ENCODE measurements at regions of chr16 and their contacts with region 1.

Region 1: GRCh38 chr16:46689365-46690280 is at the start of gene ORC6:
- DNase-seq: peak; percentile 98
- H3K4me3 ChIP-seq: peak within 1 kb of the TSS; percentile 90
- H3K27ac ChIP-seq: peak within 1 kb of the TSS; percentile 79
- H3K4me1 ChIP-seq: peaks cover 34% of the 10 kb centered on the region
- CTCF ChIP-seq: peak; percentile 85
- total RNA-seq, gene ORC6: 60.6 and 67.4 TPM in 2 replicates

Region 2: DNA sequence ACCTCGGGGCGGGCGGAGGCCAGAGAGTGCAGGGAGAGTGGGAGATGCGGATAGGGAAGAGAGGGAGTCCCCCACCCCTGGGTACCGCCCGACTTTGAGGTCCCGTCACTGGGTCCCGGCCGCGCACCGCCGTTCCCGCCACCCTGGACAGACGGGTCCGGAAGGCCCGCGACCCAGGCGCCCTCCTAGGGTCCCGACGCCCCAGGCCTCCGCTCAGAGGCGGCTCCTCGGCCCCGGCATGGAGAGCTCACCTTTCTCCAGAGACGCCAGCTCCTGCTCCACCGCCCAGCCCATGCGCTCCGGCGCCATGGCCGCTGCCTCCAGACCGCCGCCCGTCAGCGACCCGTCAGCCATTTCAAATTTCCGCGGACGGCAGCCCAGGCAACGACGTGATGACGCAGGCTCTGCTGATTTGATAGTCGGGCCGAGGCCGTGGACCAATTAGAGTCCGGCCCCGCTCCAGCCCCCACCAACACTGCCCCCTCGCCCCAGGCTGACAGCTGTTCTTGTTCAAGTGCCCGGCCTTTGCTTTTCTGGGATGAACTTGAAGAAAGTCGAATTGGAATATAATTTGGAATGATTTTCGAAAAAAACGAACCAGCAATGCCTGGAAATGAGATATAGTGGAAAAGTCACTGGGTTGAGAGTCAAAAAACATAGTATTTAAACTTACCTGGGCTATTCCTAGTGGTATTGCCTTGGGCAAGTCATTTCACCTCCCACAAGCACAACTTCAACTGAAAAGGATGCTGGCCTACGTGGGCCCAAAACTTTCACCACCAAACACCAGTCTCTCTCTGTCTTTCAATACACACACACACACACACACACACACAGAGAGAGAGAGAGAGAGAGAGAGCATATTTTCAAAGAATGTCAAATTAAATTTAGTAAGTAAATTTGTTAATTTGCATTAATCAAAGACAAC is 68.4 kb before region 1 on chr16 and contains the start of gene SHCBP1:
- CTCF ChIA-PET with region 1: no interaction called
- POLR2A ChIA-PET with region 1: no interaction called
- intact Hi-C with region 1: loop called (anchors 2 kb)
- DNase-seq: peak; percentile 92
- H3K4me3 ChIP-seq: peak within 1 kb of the TSS; percentile 86
- H3K27ac ChIP-seq: peak within 1 kb of the TSS; percentile 76
- H3K4me1 ChIP-seq: peaks cover 31% of the 10 kb centered on the region
- CTCF ChIP-seq: no peak; the same call in 1 of the 2 replicates
- total RNA-seq, gene SHCBP1: 32.6 and 35.3 TPM in 2 replicates

Region 3: DNA sequence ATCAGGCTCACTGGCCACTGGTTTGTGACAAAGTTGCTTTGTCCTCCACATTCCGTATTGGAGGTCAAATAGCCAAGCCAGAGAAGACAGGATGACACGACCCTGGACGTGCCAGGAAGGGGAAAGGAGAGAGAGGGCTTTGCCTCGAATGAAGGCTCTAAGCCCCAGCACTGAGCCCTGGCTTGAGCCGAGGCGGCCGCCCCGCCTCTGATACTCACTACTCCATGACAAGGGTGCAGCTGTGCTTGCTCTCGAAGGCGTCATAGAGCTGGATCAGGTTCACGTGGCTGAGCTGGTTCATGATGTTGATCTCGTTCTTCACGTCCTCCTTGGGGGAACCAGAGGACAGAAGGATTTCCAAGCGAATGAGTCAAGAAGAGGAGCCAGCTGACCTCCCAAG is 39.2 kb after region 1 on chr16:
- CTCF ChIA-PET with region 1: no interaction called
- POLR2A ChIA-PET with region 1: no interaction called
- intact Hi-C with region 1: no loop called
- DNase-seq: no peak
- H3K4me3 ChIP-seq: no peak overlapping the region
- H3K27ac ChIP-seq: no peak overlapping the region
- H3K4me1 ChIP-seq: no peaks in the 10 kb centered on the region
- CTCF ChIP-seq: no peak

Region 4: DNA sequence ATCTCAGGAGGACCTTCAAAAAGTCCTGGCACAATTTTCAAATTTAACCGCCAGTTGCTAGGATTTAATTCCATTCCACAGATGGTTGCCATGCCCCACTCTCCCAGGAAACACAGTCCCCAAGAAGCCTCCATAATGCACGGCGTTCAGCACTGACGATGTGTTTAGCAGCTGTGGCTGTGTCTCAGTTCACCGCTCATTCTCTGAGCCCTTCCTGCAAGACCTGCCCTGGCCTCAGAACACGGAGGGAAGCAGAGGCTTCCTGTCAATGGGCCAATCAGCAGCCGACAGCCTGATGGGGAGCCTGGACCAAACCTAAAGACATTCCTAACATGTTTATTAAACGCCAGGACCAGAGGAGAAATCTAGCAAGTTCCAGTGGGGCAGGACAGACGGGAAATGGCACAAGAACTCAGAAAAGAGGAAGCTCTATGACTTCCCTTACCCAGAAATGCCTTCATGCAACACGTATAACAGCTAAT is 53.7 kb after region 1 on chr16:
- CTCF ChIA-PET with region 1: no interaction called
- POLR2A ChIA-PET with region 1: interaction called, 10 read pairs
- intact Hi-C with region 1: loop called (anchors 2 kb)
- DNase-seq: peak; percentile 86
- H3K4me3 ChIP-seq: peak overlapping the region; percentile 60
- H3K27ac ChIP-seq: peak overlapping the region; percentile 60
- H3K4me1 ChIP-seq: peaks cover 25% of the 10 kb centered on the region
- CTCF ChIP-seq: no peak

Region 5: GRCh38 chr16:46830902-46831647 is 141.5 kb after region 1 on chr16 and contains the start of gene C16orf87:
- CTCF ChIA-PET with region 1: no interaction called
- POLR2A ChIA-PET with region 1: interaction called, 4 read pairs
- intact Hi-C with region 1: loop called (anchors 1 kb)
- DNase-seq: peak; percentile 96
- H3K4me3 ChIP-seq: peak within 1 kb of the TSS; percentile 90
- H3K27ac ChIP-seq: peak within 1 kb of the TSS; percentile 80
- H3K4me1 ChIP-seq: peaks cover 65% of the 10 kb centered on the region
- CTCF ChIP-seq: no peak
- total RNA-seq, gene C16orf87: 9.1 and 14.9 TPM in 2 replicates

Region 6: DNA sequence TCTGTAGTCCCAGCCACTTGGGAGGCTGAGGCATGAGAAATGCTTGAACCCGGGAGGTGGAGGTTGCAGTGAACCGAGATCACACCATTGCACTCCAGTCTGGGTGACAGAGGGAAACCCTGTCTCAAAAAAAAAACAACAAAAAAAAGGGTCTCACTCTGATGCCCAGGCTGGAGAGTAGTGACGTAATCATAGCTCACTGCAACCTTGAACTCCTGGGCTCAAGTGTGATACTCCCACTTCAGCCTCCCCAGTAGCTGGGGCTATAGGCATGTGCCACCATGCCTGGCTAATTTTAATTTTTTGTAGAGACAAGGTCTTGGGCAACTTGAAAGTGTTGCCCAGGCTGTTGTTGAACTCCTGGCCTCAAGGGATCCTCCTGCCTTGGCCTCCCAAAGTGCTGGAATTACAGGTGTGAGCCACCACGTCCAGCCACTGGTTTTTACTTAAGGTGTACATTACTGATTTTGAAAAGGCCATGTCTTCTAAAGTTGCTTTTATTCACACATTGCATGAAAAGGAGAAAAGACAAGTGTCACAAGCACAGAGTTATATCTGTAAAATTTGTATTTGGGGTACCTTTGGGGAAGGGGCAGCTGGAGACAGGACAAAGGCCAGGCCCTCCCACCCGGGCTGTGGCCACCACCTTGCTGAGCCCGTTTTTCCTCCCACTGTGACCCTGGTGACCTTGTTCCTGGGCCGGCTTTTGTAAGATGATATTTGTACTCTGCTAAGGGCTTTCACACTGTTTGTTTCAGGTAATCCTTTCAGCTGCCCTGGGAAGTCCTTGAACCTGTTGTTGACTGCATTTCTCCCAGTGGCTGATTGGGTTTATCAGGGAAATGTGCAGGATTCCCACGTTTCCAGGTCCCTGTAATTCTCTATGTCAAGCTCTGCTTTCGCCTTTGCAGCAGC is 206.0 kb after region 1 on chr16:
- CTCF ChIA-PET with region 1: no interaction called
- POLR2A ChIA-PET with region 1: no interaction called
- intact Hi-C with region 1: no loop called
- DNase-seq: no peak
- H3K4me3 ChIP-seq: no peak overlapping the region
- H3K27ac ChIP-seq: no peak overlapping the region
- H3K4me1 ChIP-seq: no peaks in the 10 kb centered on the region
- CTCF ChIP-seq: no peak

Region 7: DNA sequence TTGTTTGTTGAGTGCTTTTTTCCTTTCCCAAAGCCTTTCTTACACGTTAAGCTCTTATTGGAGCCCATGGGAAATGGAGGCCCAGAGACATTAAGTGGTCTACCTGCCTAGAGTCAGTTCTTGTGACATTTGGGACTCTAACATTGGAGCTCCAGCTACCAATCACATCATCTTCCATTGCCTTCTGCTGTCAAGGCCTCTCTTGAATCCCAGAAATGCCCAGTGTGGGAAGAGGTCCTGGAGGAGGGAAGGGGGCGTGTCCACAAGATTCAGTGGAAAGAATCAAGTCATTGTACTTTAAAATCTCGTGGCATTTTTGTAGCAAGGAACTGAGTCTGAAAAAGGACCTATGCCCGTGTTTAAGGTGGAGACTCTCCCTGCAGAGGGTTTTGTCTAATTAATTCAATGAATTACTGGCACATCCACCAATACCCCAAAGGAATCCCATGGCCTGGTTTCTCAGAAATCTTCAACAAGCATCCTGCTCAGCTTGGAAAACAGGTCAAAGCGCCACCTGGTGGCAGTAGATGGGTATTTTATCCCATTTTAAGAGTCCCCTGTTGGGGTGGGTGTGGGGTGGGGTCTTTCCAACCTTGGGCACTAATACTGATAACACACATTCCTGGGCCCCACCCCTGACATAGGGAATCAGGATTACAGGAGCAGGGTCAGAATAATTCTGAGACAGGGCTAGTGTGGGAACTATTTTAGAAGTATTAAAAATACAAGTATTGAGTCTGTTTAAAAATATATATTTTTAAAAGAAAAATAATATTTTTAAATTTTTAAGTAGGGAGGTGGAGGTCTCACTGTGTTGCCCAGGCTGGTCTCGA is 219.1 kb after region 1 on chr16:
- CTCF ChIA-PET with region 1: no interaction called
- POLR2A ChIA-PET with region 1: no interaction called
- intact Hi-C with region 1: loop called (anchors 5 kb)
- DNase-seq: peak; percentile 79
- H3K4me3 ChIP-seq: no peak overlapping the region
- H3K27ac ChIP-seq: no peak overlapping the region
- H3K4me1 ChIP-seq: peaks cover 8% of the 10 kb centered on the region
- CTCF ChIP-seq: peak; percentile 85

Measured in OCI-LY7 (cell line).